Panc1 (cell line): ENCODE measurements at regions of chr2 and their contacts with region 1.

Region 1: DNA sequence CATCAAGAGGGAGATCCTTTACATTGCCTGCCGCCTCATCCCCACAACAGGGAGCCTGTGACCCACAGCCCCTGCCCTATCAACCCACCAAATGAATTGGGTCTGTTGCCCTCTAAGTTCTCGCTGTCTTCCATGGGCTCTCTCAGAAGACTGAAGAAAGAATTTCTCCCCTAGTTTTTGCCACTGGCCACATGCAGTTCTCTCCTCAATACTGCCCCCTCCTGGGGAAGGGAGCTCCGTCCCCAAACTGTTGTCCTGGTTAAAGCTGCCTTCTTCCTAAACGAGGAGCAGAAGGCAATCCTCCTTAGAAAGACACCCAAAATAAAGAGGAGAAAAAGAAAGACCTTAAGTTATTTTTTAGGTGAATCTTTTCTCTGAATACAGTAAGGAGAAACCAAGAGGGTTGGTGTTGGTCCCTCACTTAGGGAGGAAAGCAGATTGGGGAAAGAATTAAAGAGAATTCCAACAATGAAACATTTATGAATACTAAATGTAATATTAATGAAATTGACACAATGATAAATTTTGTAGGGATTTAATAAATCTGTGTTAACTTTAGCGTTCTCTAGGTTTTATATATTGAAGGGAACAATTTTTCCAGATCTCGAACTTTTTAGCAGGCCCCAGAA is 31.1 kb upstream of the SATB2 start:
- DNase-seq: no peak
- ATAC-seq: no peak
- H3K4me3 ChIP-seq: no peak overlapping the region
- H3K27ac ChIP-seq: no peak overlapping the region
- H3K4me1 ChIP-seq: no peaks in the 10 kb centered on the region
- H3K27me3 ChIP-seq: no peaks in the 10 kb centered on the region
- CTCF ChIP-seq: peak; percentile 86

Region 2: DNA sequence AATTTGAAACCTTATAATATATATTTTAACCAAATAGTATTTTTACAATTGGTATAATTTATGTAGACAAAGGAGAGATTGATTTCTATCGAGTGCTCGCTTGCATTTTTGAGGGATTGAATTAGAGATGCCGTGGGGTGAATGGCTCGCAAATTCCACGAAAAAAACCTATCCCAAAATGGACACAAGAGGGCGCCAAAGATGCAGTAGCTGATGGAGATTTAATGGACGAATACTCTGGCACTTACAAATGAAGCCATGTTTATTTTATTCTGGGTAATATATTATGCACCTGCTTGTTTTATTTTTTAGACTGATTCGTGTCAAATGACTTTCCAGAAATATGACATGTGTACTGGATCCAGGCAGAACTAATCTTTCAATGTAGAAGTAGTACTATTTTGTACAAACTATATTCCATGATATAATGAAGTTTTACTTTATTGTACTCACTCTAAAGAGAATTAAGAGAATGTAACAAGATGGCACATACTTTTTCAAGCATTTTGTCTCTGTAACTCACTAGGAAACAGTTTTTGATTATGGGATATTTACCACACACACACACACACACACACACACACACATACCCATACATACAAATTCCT is 1179.1 kb before region 1 on chr2:
- CTCF ChIA-PET with region 1: interaction called, 3 read pairs
- POLR2A ChIA-PET with region 1: no interaction called
- in situ Hi-C with region 1: no loop called
- intact Hi-C with region 1: loop called (anchors 2 kb)
- DNase-seq: no peak
- ATAC-seq: no peak
- H3K4me3 ChIP-seq: no peak overlapping the region
- H3K27ac ChIP-seq: no peak overlapping the region
- H3K4me1 ChIP-seq: no peaks in the 10 kb centered on the region
- H3K27me3 ChIP-seq: peaks cover 10% of the 10 kb centered on the region
- CTCF ChIP-seq: peak; percentile 89

Region 3: DNA sequence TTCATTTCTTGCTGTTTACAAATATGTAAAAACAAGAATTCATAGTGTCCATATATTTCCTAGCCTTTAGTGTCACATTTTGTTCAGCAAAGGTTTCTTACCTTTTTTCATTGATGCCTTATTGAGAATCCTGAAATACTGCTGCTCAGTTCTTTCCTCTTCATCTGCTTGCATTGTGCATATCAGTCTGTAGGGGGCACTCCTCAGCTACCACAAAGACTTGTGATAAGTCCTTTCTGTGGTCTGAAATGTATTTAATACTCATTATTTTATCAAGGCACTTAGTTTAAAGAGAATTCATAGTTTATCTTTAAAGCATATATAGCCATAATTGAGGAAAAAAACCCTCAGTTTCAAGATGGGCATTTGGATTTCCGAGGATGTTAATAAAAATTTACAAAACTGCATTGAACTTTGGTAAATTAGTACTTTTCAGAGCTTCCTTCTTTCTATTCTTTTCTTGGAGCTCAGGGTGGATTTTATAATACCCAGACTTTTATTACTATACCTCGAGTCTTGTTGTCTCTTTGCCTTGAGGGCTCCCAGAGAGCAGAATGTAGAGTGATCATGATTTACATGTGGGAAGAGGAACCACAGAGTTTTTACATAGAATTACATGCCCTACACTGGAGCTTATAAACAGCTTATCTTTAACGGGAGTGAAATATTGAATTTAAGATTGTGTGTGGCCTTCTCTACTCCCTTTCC is 1114.4 kb before region 1 on chr2:
- CTCF ChIA-PET with region 1: no interaction called
- POLR2A ChIA-PET with region 1: no interaction called
- in situ Hi-C with region 1: no loop called
- intact Hi-C with region 1: loop called (anchors 10 kb)
- DNase-seq: peak; percentile 30
- ATAC-seq: peak; percentile 70; the same call in 1 of the 2 replicates
- H3K4me3 ChIP-seq: no peak overlapping the region
- H3K27ac ChIP-seq: no peak overlapping the region
- H3K4me1 ChIP-seq: no peaks in the 10 kb centered on the region
- H3K27me3 ChIP-seq: no peaks in the 10 kb centered on the region; the same call in 1 of the 2 replicates
- CTCF ChIP-seq: peak; percentile 81; the same call in 1 of the 2 replicates

Region 4: DNA sequence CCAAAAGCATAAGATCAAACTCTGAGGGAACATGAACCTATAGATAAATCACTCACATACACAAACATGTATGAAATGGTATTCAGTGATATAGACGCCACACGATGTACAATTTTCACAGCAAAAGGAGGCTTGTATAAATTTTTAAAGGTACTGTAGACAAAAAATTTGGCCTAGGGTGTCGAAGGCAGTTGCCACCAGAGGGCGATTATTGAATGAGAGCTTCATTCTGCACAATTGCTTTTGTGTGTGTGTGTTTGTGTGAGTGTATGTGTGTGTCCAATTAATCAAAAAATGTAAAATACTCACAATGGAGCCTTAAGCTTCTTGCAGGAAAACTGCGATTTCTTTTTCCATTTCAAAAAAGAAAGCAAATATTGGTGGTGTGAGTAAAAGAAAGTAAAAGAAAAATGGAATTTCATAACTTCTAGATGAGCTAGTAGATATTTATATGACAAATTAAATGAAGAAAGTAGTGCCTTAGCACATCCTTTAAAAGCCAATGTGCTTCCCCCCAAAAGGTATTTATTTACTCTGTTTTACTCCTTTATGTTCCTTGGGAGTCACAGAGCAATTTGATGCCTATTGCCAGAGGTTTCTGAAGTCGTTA is 831.3 kb before region 1 on chr2:
- CTCF ChIA-PET with region 1: no interaction called
- POLR2A ChIA-PET with region 1: no interaction called
- in situ Hi-C with region 1: no loop called
- intact Hi-C with region 1: loop called (anchors 5 kb)
- DNase-seq: peak; percentile 5
- ATAC-seq: no peak
- H3K4me3 ChIP-seq: no peak overlapping the region
- H3K27ac ChIP-seq: no peak overlapping the region
- H3K4me1 ChIP-seq: no peaks in the 10 kb centered on the region
- H3K27me3 ChIP-seq: no peaks in the 10 kb centered on the region
- CTCF ChIP-seq: peak; percentile 56; the same call in 1 of the 2 replicates

Region 5: DNA sequence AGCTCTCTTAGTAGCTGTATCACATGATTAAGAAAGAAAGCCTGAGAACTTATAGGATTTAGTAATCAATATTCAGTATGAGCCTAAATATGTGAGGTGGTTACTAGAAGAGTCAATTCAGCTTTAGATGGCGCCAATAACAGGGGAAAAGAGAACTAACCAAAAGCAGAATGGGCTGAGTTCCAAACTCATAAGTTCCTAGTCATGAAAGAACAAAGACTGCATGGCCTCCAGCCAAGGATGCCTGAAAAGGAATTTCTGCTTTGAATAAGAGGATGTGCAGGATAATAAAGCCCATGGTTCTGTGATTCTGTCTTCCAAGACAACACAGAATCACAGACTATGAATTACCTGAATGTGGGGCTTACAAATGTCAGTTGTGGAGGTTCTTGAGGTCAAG is 227.6 kb before region 1 on chr2:
- CTCF ChIA-PET with region 1: no interaction called
- POLR2A ChIA-PET with region 1: no interaction called
- in situ Hi-C with region 1: no loop called
- intact Hi-C with region 1: no loop called
- DNase-seq: no peak
- ATAC-seq: no peak
- H3K4me3 ChIP-seq: no peak overlapping the region
- H3K27ac ChIP-seq: no peak overlapping the region
- H3K4me1 ChIP-seq: no peaks in the 10 kb centered on the region
- H3K27me3 ChIP-seq: no peaks in the 10 kb centered on the region
- CTCF ChIP-seq: no peak

Region 6: DNA sequence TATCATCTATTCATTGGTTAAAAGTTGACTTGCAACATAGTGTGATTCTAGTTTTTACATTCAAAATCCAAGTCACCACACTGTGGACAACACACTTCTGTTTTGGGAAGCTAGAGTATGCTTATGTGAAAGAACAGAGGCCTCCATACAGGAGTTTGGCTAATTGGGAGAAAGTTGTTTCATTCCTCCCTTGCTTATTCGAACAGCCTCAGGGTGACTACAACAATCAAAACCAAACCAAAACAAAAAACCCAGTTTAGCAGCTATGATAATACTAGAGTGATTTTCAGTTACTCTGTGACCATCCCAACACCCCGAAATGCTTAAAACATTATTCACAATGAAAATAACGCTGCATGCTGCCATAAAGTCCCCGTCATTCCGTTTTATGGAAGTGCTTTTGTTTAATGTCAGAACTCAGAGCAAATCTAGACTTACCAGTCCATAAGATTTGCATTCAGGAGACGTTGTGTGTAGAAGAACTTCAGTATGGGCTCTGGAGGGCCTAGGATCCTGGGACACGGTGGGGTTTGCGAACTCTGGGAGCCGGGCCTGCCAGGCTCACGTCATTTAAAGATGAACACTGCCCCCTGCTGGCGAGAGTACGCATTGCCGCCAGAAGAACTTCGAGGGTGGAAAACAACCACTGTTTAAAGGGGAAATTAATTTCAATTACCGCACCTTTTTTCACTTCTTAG is 250.7 kb after region 1 on chr2:
- CTCF ChIA-PET with region 1: no interaction called
- POLR2A ChIA-PET with region 1: interaction called, 3 read pairs
- in situ Hi-C with region 1: no loop called
- intact Hi-C with region 1: loop called (anchors 5 kb)
- DNase-seq: peak; percentile 24
- ATAC-seq: peak; percentile 79
- H3K4me3 ChIP-seq: no peak overlapping the region
- H3K27ac ChIP-seq: no peak overlapping the region
- H3K4me1 ChIP-seq: no peaks in the 10 kb centered on the region
- H3K27me3 ChIP-seq: peaks cover 13% of the 10 kb centered on the region
- CTCF ChIP-seq: peak; percentile 90